Mammary epithelial cell (primary cell): ENCODE measurements at regions of chr13 and their contacts with region 1.

Region 1: GRCh38 chr13:39998166-39998565 is 342.7 kb downstream of the COG6 start:
- DNase-seq: no peak
- H3K4me3 ChIP-seq: no peak overlapping the region
- H3K27ac ChIP-seq: no peak overlapping the region
- H3K4me1 ChIP-seq: no peaks in the 10 kb centered on the region
- H3K27me3 ChIP-seq: no peaks in the 10 kb centered on the region
- CTCF ChIP-seq: no peak

Region 2: DNA sequence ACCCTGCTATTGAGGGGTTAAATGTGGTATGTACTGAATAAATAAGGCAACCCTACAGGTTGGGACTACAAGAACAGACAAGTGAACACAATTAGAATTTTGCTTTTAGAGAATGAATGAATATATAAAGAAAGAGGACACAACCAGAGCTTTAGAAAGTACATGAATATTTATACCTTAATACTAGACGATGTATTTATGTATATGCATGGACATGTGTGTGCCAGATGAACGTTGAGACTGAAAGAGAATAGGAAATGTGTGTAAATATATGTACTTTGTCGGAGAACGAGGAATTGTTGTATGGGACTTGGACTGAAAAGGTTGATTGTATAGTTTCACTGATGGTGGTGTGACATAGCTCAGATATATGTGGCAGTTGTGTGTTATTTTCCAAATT is 352.0 kb before region 1 on chr13:
- CTCF ChIA-PET with region 1: no interaction called
- dilution Hi-C with region 1: no loop called
- in situ Hi-C with region 1: no loop called
- intact Hi-C with region 1: no loop called
- DNase-seq: no peak
- H3K4me3 ChIP-seq: no peak overlapping the region
- H3K27ac ChIP-seq: no peak overlapping the region
- H3K4me1 ChIP-seq: no peaks in the 10 kb centered on the region
- H3K27me3 ChIP-seq: no peaks in the 10 kb centered on the region
- CTCF ChIP-seq: no peak

Region 3: GRCh38 chr13:40026174-40026585 is 28.0 kb after region 1 on chr13:
- CTCF ChIA-PET with region 1: interaction called, 10 read pairs
- dilution Hi-C with region 1: no loop called
- in situ Hi-C with region 1: no loop called
- intact Hi-C with region 1: no loop called
- DNase-seq: peak; percentile 73
- H3K4me3 ChIP-seq: no peak overlapping the region
- H3K27ac ChIP-seq: no peak overlapping the region
- H3K4me1 ChIP-seq: no peaks in the 10 kb centered on the region
- H3K27me3 ChIP-seq: no peaks in the 10 kb centered on the region
- CTCF ChIP-seq: no peak